ENCODE measurements at regions of chr10 and their contacts with region 1.

Region 1: DNA sequence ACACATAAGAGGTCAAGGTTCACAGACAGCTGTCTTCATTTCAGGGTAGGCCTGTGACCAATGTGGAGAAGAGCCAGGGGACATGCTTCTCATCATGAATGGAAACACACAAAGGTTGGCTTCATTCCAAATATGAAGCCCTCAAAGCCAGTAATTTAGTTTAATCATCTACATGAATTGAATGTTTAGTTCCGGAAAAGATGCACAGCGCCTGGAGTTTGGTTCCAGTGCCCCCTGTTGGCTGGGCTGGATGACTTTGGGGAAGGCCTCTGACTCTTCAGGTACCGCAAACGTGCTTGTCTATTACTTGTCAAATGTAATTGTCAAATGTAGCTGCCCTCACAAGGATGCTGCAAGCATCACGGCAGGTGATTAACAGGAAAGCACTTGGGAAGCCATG is 130.7 kb downstream of the ADRA2A start:
- DNase-seq: peak in 1 of 2 experiments; percentile 47
- H3K4me3 ChIP-seq: no peak overlapping the region
- H3K27ac ChIP-seq: no peak overlapping the region
- H3K4me1 ChIP-seq: peaks cover 0 to 3% (median 2%) of the 10 kb centered on the region in 4 experiments; a peak in 1 of 7 replicates
- H3K27me3 ChIP-seq: no peaks in the 10 kb centered on the region
- CTCF ChIP-seq: peak; percentile 59 to 69 (median 66)
- EP300 ChIP-seq: no peak
- POLR2A ChIP-seq: no peak
- RAD21 ChIP-seq: peak; percentile 78 to 80

Region 2: GRCh38 chr10:111107023-111107422 is 100.5 kb before region 1 on chr10:
- CTCF ChIA-PET with region 1: interaction called, 12 read pairs
- POLR2A ChIA-PET with region 1: no interaction called
- DNase-seq: peak in 1 of 2 experiments; percentile 51
- H3K4me3 ChIP-seq: no peak overlapping the region
- H3K27ac ChIP-seq: no peak overlapping the region
- H3K4me1 ChIP-seq: peaks cover 0 to 5% (median 0%) of the 10 kb centered on the region in 4 experiments; a peak in 2 of 7 replicates
- H3K27me3 ChIP-seq: no peaks in the 10 kb centered on the region; a peak in 1 of 7 replicates
- CTCF ChIP-seq: peak; percentile 35 to 62 (median 38)
- EP300 ChIP-seq: no peak
- POLR2A ChIP-seq: no peak
- RAD21 ChIP-seq: peak; percentile 35 to 55; a peak in 3 of 4 replicates

Region 3: GRCh38 chr10:111148440-111148839 is 59.1 kb before region 1 on chr10:
- CTCF ChIA-PET with region 1: no interaction called
- POLR2A ChIA-PET with region 1: no interaction called
- DNase-seq: no peak
- H3K4me3 ChIP-seq: no peak overlapping the region
- H3K27ac ChIP-seq: no peak overlapping the region
- H3K4me1 ChIP-seq: no peaks in the 10 kb centered on the region
- H3K27me3 ChIP-seq: no peaks in the 10 kb centered on the region
- CTCF ChIP-seq: no peak
- EP300 ChIP-seq: no peak
- POLR2A ChIP-seq: no peak
- RAD21 ChIP-seq: no peak

Region 4: GRCh38 chr10:111186358-111186757 is 21.1 kb before region 1 on chr10:
- CTCF ChIA-PET with region 1: interaction called, 10 read pairs
- POLR2A ChIA-PET with region 1: no interaction called
- DNase-seq: no peak
- H3K4me3 ChIP-seq: no peak overlapping the region
- H3K27ac ChIP-seq: no peak overlapping the region
- H3K4me1 ChIP-seq: no peaks in the 10 kb centered on the region
- H3K27me3 ChIP-seq: no peaks in the 10 kb centered on the region
- CTCF ChIP-seq: no peak
- EP300 ChIP-seq: no peak
- POLR2A ChIP-seq: no peak
- RAD21 ChIP-seq: no peak

Region 5: GRCh38 chr10:111221682-111222480 is 14.4 kb after region 1 on chr10:
- CTCF ChIA-PET with region 1: interaction called, 24 read pairs
- POLR2A ChIA-PET with region 1: no interaction called
- DNase-seq: no peak
- H3K4me3 ChIP-seq: no peak overlapping the region
- H3K27ac ChIP-seq: no peak overlapping the region
- H3K4me1 ChIP-seq: no peaks in the 10 kb centered on the region
- H3K27me3 ChIP-seq: no peaks in the 10 kb centered on the region
- CTCF ChIP-seq: no peak
- EP300 ChIP-seq: no peak
- POLR2A ChIP-seq: no peak
- RAD21 ChIP-seq: no peak

Region 6: DNA sequence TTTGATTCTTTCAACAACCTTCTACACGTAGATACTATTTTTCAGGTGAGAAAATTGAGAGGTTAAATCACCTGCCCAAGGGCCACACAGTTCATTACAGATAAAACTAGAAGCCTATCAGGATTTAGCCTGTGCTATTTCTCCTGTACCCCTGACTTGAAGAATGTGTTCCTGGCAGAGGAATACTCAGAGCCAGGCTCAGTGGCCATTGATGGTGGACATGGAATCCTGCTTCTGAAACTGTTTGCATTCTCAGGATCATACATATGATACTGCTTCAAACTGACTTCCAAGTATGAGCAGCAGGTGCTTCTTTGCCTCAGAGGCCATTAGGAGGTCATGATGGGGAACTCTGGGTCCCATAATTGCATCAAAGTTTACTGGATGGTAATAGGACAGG is 218.0 kb after region 1 on chr10:
- CTCF ChIA-PET with region 1: no interaction called
- POLR2A ChIA-PET with region 1: no interaction called
- DNase-seq: no peak
- H3K4me3 ChIP-seq: no peak overlapping the region
- H3K27ac ChIP-seq: no peak overlapping the region
- H3K4me1 ChIP-seq: no peaks in the 10 kb centered on the region
- H3K27me3 ChIP-seq: no peaks in the 10 kb centered on the region
- CTCF ChIP-seq: no peak
- EP300 ChIP-seq: no peak
- POLR2A ChIP-seq: no peak
- RAD21 ChIP-seq: no peak